ENCODE measurements at regions of chr10 and their contacts with region 1.

Region 1: DNA sequence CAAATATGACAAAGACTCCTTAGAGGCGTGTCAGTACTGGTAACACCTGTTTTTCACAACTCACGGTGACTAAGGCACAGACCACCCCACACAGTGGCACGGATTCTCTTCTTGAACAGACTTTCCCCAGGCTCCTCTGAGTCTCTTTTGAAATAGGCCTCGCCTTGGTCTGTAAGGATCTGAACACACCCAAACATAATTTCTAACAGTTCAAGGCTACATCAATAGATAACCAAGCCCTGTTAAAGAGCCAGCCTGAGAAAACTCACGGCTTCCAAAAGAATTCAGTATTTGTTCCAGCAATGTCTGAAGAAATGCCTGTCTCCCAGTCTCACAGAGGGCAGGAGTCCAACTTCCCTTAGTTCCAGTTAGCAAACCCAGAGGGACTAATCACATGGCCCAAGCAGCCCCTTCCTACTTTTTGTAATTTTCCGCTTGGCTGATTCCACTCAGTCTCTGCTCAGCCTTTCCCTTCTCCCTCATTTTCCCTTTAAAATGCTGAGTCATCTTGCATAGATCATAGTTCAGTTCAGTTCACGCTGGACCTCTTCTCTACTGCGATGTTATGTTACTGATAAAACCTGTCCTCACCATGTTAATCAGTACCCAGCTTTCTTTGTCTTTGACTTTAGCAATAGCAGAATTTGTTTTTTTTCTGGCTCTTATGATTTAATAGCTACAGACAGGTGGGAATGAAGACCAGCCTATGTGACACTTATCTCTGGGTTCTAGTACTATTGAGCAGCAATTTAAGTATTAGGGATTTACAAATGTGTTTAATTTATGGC is 22.6 kb upstream of the AKR1C3 start:
- DNase-seq: peak; percentile 100
- ATAC-seq: peak; percentile 89
- H3K4me3 ChIP-seq: peak overlapping the region; percentile 27 to 47 (median 30); a peak in 4 of 6 replicates
- H3K27ac ChIP-seq: peak overlapping the region; percentile 99
- H3K4me1 ChIP-seq: peaks cover 80% of the 10 kb centered on the region
- H3K27me3 ChIP-seq: no peaks in the 10 kb centered on the region
- CTCF ChIP-seq: no peak
- EP300 ChIP-seq: peak; percentile 94 to 98
- POLR2A ChIP-seq: peak; percentile 12 to 26; a peak in 3 of 4 replicates
- RAD21 ChIP-seq: no peak

Region 2: DNA sequence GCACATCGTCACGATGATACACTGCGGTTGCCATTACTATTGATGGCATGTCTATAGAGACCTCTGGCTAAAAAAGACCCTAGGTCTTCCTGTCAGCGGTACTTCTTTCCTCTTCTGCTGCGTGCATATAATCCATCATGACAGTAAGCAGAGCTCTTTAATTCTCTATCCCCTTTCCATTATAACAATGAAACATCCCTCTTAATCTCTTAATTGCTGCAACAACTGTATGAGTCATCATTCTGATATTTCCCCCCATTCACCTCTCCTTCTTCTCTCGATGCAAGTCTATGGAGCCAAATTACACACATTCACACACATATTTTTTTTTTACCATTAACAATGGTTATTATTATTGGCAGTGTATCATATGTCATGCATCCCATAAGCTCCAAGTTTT is 290.8 kb before region 1 on chr10:
- CTCF ChIA-PET with region 1: no interaction called
- POLR2A ChIA-PET with region 1: no interaction called
- in situ Hi-C with region 1: no loop called
- intact Hi-C with region 1: no loop called
- DNase-seq: no peak
- ATAC-seq: no peak
- H3K4me3 ChIP-seq: no peak overlapping the region
- H3K27ac ChIP-seq: no peak overlapping the region
- H3K4me1 ChIP-seq: no peaks in the 10 kb centered on the region
- H3K27me3 ChIP-seq: peaks cover 0 to 5% of the 10 kb centered on the region in 2 experiments; a peak in 2 of 5 replicates
- CTCF ChIP-seq: no peak
- EP300 ChIP-seq: no peak
- POLR2A ChIP-seq: no peak
- RAD21 ChIP-seq: no peak

Region 3: DNA sequence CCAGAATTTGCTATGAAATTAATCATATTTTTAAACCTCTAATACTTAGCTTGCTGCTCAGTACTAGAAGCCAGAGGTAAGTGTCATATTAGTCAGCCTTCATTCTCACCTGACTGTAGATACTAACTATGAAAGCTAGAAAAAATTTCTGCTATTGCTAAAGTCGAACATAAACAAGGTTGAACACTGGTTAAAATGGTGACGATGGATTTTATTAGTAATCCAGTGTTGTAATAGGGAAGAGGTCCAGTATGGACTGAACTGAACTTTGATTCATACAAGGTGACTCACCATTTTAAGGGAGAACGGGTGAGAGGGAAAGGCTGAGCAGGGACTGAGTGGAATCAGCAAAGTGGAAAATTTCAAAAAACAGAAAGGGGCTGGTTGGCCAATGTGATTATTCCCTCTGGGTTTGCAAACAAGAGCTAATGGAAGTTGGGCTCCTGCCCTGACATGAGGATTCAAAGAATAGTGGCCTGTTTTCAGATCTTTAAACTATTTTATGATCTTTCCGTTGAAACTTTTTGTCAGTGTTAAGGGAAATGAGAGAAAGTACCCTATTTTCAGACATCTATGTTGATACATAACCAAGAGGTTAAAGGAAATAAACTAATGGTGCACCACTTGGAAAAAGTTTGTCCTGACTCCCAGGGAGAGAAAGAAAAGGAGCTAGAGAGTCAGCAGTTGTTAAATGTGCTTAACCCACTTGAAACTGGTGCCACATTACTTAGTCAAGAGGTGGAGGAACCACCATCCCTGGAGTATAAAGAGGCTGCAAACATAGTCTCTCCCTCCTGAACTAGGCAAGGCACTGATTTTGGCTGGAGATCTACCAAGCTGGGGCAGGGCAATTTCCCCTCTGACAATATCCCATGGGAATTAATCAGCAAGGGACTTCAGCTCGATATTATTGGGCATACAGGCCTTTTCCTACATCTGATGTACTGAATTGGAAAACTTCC is 123.7 kb before region 1 on chr10:
- CTCF ChIA-PET with region 1: no interaction called
- POLR2A ChIA-PET with region 1: interaction called, 7 read pairs
- in situ Hi-C with region 1: no loop called
- intact Hi-C with region 1: loop called (anchors 2 kb)
- DNase-seq: peak; percentile 100
- ATAC-seq: peak; percentile 91
- H3K4me3 ChIP-seq: peak overlapping the region in 2 of 3 experiments; percentile 5 to 36; a peak in 2 of 6 replicates
- H3K27ac ChIP-seq: peak overlapping the region; percentile 99
- H3K4me1 ChIP-seq: peaks cover 93% of the 10 kb centered on the region
- H3K27me3 ChIP-seq: no peaks in the 10 kb centered on the region
- CTCF ChIP-seq: no peak
- EP300 ChIP-seq: peak; percentile 62 to 97; a peak in 3 of 4 replicates
- POLR2A ChIP-seq: peak; percentile 4 to 65; a peak in 2 of 4 replicates
- RAD21 ChIP-seq: no peak